ENCODE measurements at regions of chr1 and their contacts with region 1.

Region 1: DNA sequence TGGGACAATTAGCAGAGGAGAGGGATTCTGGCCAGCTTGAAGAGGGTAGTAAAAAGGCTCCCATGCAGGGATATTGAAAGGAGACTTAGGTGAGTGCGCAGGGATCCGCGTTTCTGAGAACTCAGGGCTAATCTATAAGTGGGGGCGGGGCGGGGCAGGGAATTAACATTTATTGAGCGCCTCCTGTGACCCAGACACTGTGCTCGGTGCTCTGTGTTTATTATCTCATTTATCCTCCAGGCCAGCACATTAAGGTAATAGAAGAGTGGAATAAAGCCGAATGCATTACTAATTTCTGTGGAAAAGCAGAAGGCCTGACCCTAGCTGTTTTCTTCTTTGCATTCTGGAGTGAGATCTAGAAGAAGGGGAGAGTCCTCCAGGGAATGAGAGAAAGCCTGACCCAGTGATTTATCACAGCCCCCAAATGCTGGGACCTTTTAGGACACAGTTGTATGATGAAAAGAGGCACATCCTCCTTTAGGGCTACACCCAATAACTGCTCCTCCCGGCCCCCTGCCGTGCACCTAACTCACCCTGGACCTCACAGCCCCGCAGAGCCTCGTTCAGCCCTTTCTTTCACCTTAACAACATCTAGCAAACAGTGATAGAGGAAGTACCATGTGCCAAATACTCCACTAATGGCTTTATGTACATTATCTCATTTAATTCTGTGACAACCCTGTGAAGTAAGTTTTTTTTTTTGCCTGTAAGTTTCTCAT is 317.6 kb downstream of the PBX1 start:
- DNase-seq: no peak
- H3K4me3 ChIP-seq: no peak overlapping the region
- H3K27ac ChIP-seq: no peak overlapping the region
- H3K4me1 ChIP-seq: no peaks in the 10 kb centered on the region
- H3K27me3 ChIP-seq: no peaks in the 10 kb centered on the region
- CTCF ChIP-seq: no peak
- POLR2A ChIP-seq: no peak

Region 2: DNA sequence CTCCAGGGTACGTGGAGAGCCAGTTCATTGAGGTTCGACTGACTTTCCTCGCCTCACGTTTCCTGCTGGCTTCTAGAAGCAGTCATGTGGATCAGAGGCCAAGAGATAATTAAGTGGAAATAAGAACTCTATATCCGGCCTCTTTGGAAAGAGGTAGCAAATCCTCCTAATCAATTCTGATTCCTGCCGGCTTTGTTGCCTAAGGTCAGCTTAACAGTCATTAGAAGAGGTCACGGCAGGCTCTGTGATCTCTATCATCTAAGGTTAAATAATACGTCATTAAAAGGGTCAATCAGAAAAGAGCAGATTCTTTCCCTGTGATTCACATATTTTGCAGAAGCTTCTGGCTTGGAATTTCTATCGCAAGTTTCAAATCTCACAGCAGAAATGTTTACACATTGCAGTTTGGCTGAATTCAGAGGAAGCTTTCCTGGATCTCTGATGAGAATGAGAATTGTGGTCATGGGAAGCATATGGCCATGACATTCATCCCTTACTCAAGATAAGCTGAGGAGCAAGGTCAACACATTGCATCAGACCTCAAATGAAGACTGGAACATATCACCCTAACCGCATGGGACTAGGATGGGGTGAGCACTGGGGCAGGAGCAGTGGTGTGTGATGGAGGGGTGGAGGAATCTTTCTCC is 128.2 kb before region 1 on chr1:
- intact Hi-C with region 1: no loop called
- DNase-seq: no peak
- H3K4me3 ChIP-seq: no peak overlapping the region
- H3K27ac ChIP-seq: peak overlapping the region; percentile 70
- H3K4me1 ChIP-seq: peaks cover 63% of the 10 kb centered on the region
- H3K27me3 ChIP-seq: no peaks in the 10 kb centered on the region
- CTCF ChIP-seq: no peak
- POLR2A ChIP-seq: no peak

Region 3: DNA sequence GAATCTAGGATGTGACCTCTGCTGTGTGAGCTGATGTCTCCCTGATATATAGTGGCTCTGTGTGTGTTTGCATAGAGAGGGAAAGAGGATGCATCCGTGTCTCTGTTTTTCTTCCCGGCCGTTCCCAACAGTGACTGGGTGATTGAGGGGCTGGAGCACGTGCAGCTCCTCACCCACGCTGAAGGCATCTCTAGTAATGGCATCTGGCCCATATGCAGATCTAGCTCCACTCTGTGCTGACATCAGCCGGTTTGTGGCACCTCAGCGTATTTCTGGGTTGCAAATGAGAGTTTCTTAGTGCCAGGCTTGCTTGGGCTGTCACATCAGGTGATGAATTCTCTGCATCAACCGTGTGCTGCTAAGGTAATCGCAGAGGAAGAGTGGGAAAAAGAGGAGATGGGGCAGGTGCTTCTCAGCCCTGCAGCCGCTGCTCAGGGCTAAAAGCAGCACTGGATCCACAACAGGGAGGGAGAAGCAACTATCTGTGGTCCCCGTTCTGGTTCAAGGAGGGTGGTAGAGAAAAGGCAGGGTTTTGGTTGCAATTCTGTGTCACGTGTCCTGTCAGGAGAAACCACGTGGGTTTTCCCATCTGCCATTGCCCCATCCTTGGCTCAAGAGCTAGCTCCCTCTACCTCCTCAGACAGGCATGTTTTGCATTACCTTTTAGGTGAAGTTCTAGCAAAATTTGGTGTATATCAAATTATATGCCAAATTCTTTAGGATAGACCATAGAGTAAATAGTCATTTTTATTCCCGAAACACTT is 34.7 kb before region 1 on chr1:
- intact Hi-C with region 1: no loop called
- DNase-seq: no peak
- H3K4me3 ChIP-seq: no peak overlapping the region
- H3K27ac ChIP-seq: no peak overlapping the region
- H3K4me1 ChIP-seq: peaks cover 25% of the 10 kb centered on the region
- H3K27me3 ChIP-seq: no peaks in the 10 kb centered on the region
- CTCF ChIP-seq: no peak
- POLR2A ChIP-seq: no peak

Region 4: DNA sequence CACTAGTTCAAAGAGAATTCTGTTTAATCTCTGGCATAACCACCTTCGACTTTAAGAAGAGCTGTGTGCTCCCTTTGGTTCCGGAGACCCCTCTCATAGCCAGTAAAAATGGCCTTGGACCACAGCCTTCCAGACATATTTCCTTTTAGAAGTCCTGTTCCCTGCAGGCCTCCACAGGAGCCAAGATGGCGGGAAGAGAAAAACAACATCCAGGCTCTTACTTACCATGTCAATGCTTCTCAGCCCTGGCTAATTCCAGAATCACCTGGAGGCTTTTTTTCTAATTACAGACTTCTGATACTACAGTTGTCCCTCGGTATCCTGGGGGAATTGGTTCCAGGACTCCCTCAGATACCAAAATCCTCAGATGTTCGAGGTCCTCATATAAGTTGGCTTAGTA is 44.9 kb after region 1 on chr1:
- intact Hi-C with region 1: loop called (anchors 2 kb)
- DNase-seq: no peak
- H3K4me3 ChIP-seq: no peak overlapping the region
- H3K27ac ChIP-seq: no peak overlapping the region
- H3K4me1 ChIP-seq: no peaks in the 10 kb centered on the region
- H3K27me3 ChIP-seq: no peaks in the 10 kb centered on the region
- CTCF ChIP-seq: no peak
- POLR2A ChIP-seq: no peak

Region 5: DNA sequence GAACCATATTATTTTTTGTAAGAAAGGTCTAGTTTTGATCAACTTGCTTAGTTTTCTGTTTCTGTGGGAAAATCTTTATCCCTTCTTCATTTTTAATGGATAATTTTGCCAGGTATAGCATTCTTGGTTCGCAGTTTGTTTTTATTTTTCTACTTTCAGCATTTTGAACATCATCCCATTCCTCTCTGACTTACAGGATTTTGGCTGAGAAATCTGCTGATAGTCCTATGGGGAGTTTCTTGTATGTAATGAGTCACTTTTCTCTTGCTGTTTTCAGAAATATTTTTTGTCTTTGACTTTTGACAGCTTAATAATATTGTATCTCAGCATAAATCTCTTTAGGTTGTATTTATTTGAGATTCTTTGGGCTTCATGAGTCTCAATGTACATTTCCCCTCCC is 71.5 kb after region 1 on chr1:
- intact Hi-C with region 1: no loop called
- DNase-seq: no peak
- H3K4me3 ChIP-seq: no peak overlapping the region
- H3K27ac ChIP-seq: no peak overlapping the region
- H3K4me1 ChIP-seq: peaks cover 31% of the 10 kb centered on the region
- H3K27me3 ChIP-seq: no peaks in the 10 kb centered on the region
- CTCF ChIP-seq: no peak
- POLR2A ChIP-seq: no peak

Region 6: DNA sequence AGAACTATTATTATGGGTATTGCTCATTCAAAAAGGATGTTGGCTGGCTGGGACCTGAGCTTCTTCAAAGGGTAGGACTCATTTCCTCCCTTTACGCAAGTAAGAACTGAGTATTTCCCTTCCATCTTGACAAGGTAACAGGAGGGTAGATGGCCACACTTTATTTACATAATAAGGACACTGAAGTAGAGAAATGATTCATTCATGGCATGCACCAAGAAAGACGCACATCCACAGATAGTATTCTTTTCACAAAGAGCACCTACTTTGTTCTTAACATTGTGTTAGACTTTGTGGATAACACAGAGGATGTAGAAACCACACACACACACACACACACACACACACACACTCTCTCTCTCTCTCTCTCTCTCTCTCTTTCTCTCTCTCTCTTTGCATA is 1207.3 kb after region 1 on chr1:
- intact Hi-C with region 1: no loop called
- DNase-seq: no peak
- H3K4me3 ChIP-seq: no peak overlapping the region
- H3K27ac ChIP-seq: no peak overlapping the region
- H3K4me1 ChIP-seq: peaks cover 16% of the 10 kb centered on the region
- H3K27me3 ChIP-seq: no peaks in the 10 kb centered on the region
- CTCF ChIP-seq: no peak
- POLR2A ChIP-seq: no peak